ENCODE measurements at regions of chr1 and their contacts with region 1.

Region 1: GRCh38 chr1:86018283-86018923 is 138.2 kb downstream of the COL24A1 start:
- DNase-seq: no peak
- ATAC-seq: no peak
- H3K4me3 Mint-ChIP-seq: no peak overlapping the region
- H3K27ac Mint-ChIP-seq: no peak overlapping the region
- H3K4me1 Mint-ChIP-seq: no peaks in the 10 kb centered on the region
- H3K27me3 Mint-ChIP-seq: no peaks in the 10 kb centered on the region
- CTCF ChIP-seq: peak; percentile 90

Region 2: DNA sequence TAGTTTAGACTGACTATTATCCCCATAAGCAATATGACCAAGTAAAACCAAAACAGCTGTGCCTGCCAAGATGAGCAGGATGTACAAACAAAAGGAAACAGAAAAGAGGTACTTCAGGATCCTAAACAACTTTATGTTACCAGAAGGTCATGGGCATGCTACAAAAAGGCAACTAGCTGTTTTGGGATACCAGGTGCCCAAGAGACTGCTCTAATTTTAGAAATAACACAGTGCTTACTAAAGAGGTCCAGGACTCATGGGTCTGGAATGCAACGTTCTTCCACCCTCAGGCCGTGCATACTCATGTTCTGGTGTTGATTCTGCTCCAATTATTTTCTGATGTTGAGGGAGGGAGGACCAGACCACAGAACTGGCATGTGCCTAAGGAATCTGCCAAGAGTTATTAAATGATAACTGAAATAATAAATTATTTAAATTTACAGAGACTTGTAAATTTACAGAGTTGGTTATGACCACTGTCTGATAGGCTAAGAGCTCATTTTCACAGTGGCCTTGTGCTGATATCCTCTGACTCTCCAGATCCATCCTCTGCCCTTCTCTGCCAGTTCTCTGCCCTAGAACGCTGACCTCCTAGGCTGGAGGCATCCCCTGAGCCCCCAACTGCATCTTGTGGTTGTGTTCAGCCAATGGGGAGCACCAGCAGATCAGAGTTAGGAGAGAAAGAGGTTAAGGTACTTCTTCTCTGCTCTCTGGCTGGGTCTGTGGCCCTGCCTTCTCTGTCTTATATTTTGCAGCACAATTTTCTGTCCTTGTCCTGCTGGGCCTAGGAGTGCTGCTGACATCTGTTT is 704.3 kb before region 1 on chr1:
- CTCF ChIA-PET with region 1: interaction called, 21 read pairs
- POLR2A ChIA-PET with region 1: no interaction called
- intact Hi-C with region 1: loop called (anchors 1 kb)
- DNase-seq: no peak
- ATAC-seq: no peak
- H3K4me3 Mint-ChIP-seq: no peak overlapping the region
- H3K27ac Mint-ChIP-seq: no peak overlapping the region
- H3K4me1 Mint-ChIP-seq: peaks cover 2% of the 10 kb centered on the region
- H3K27me3 Mint-ChIP-seq: no peaks in the 10 kb centered on the region
- CTCF ChIP-seq: no peak

Region 3: GRCh38 chr1:85612704-85613361 is 405.6 kb before region 1 on chr1:
- CTCF ChIA-PET with region 1: no interaction called
- POLR2A ChIA-PET with region 1: no interaction called
- intact Hi-C with region 1: loop called (anchors 5 kb)
- DNase-seq: no peak
- ATAC-seq: no peak
- H3K4me3 Mint-ChIP-seq: no peak overlapping the region
- H3K27ac Mint-ChIP-seq: no peak overlapping the region
- H3K4me1 Mint-ChIP-seq: peaks cover 5% of the 10 kb centered on the region
- H3K27me3 Mint-ChIP-seq: peaks cover 4% of the 10 kb centered on the region
- CTCF ChIP-seq: no peak

Region 4: DNA sequence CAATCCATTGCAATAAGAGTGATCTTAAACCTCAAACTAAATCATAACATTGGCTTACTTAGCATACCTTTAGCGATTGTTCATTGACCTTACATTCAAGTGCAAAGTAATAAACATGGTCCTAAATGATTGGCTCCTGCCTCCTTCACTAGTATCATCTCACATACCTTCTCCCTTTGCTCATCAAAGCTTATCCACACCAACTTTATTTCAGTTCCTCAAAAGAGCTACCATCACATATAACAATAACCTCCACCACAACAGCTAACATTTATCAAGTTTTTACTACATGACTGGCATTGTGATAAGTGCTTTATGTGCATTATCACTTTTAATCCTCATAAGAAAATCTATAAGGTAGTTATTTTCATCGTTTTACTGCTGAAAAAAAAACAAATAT is 60.6 kb before region 1 on chr1:
- CTCF ChIA-PET with region 1: no interaction called
- POLR2A ChIA-PET with region 1: no interaction called
- intact Hi-C with region 1: no loop called
- DNase-seq: no peak
- ATAC-seq: no peak
- H3K4me3 Mint-ChIP-seq: no peak overlapping the region
- H3K27ac Mint-ChIP-seq: no peak overlapping the region
- H3K4me1 Mint-ChIP-seq: no peaks in the 10 kb centered on the region
- H3K27me3 Mint-ChIP-seq: no peaks in the 10 kb centered on the region
- CTCF ChIP-seq: no peak

Measured in activated B cell treated with CpG ODN at 0.5 μM for 24 hours (primary cell).